ENCODE measurements at regions of chr1 and their contacts with region 1.

Region 1: GRCh38 chr1:155084722-155085503 is 6.3 kb downstream of the EFNA3 start:
- DNase-seq: peak; percentile 98
- H3K4me3 ChIP-seq: peak overlapping the region; percentile 65 to 76 (median 70)
- H3K27ac ChIP-seq: peak overlapping the region; percentile 81 to 91 (median 87)
- H3K4me1 ChIP-seq: peaks cover 47 to 73% (median 59%) of the 10 kb centered on the region in 4 donors
- H3K27me3 ChIP-seq: peaks cover 16 to 45% (median 42%) of the 10 kb centered on the region in 4 donors
- CTCF ChIP-seq: peak; percentile 90 to 99 (median 95)
- EP300 ChIP-seq: no peak
- POLR2A ChIP-seq: no peak

Region 2: GRCh38 chr1:155044812-155045690 is 39.9 kb before region 1 on chr1:
- intact Hi-C with region 1: loop called (anchors 2 kb)
- DNase-seq: no peak
- H3K4me3 ChIP-seq: no peak overlapping the region
- H3K27ac ChIP-seq: no peak overlapping the region
- H3K4me1 ChIP-seq: peaks cover 11 to 20% (median 17%) of the 10 kb centered on the region in 4 donors
- H3K27me3 ChIP-seq: no peaks in the 10 kb centered on the region
- CTCF ChIP-seq: peak; percentile 77 to 88 (median 79)
- EP300 ChIP-seq: no peak
- POLR2A ChIP-seq: no peak

Region 3: GRCh38 chr1:155241069-155241679 is 156.3 kb after region 1 on chr1:
- intact Hi-C with region 1: no loop called
- DNase-seq: no peak
- H3K4me3 ChIP-seq: peak overlapping the region; percentile 45 to 56 (median 49)
- H3K27ac ChIP-seq: peak overlapping the region; percentile 1 to 57 (median 45)
- H3K4me1 ChIP-seq: peaks cover 17 to 50% (median 49%) of the 10 kb centered on the region in 4 donors
- H3K27me3 ChIP-seq: peaks cover 0 to 4% (median 0%) of the 10 kb centered on the region in 4 donors
- CTCF ChIP-seq: peak in 1 of 3 experiments; percentile 9
- EP300 ChIP-seq: no peak
- POLR2A ChIP-seq: no peak

Measured in esophagus muscularis mucosa (tissue), 4 donors.